ENCODE measurements at regions of chr4 and their contacts with region 1.

Region 1: DNA sequence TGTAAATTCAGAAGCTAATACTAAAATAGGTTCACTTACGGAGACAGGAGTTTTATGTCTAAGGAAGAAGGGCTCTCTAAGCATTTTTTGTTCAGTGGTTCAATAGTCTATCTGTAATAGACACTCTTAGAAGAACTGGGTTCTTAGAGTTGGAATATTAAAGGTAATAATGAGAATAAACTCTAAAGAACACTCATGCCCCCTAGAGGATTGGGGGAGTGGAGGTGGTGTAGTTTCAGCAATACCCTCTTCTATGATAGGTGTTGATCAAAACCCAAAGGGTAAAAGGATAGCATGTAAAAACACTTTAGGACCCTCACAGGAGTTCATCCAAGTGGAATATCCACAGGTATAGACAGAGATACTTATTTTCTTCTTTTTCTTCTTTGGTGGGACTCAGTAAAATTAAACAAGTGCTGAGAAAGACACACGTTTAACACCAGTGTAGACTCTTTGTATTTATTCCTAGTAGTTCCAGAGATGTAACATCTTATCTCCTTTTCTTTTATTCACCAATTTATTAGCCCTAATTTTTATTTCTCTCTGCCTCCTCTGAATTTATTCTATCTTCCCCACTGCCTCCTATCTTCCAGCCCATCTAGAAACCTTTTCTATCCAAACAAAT is 25.7 kb upstream of the MND1 start:
- DNase-seq: peak; percentile 68
- H3K4me3 Mint-ChIP-seq: no peak overlapping the region
- H3K27ac Mint-ChIP-seq: no peak overlapping the region
- H3K4me1 Mint-ChIP-seq: no peaks in the 10 kb centered on the region
- H3K27me3 Mint-ChIP-seq: no peaks in the 10 kb centered on the region
- CTCF ChIP-seq: peak; percentile 57

Region 2: GRCh38 chr4:152843481-152844090 is 475.2 kb before region 1 on chr4:
- CTCF ChIA-PET with region 1: no interaction called
- POLR2A ChIA-PET with region 1: no interaction called
- intact Hi-C with region 1: loop called (anchors 10 kb)
- DNase-seq: no peak
- H3K4me3 Mint-ChIP-seq: no peak overlapping the region
- H3K27ac Mint-ChIP-seq: no peak overlapping the region
- H3K4me1 Mint-ChIP-seq: no peaks in the 10 kb centered on the region
- H3K27me3 Mint-ChIP-seq: no peaks in the 10 kb centered on the region
- CTCF ChIP-seq: no peak

Region 3: DNA sequence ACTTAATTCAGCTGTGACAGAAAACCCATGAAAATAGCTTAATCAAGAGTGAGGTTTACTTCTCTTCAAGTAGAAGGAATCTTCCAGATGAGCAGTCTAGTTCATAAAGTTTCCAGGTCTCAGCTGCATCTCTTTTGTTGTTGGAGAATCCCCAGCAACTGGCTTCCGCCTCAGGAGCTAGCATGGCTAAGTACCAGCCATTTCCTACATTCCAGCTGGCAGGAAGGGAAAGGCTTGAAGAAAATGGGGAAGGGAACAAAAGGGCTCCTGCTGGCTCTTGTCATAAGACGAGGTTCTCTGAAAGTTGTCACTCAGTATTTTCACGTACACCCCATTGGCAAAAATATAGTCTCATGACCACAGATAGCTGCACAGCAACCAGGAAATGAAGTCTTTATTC is 141.9 kb before region 1 on chr4:
- CTCF ChIA-PET with region 1: no interaction called
- POLR2A ChIA-PET with region 1: no interaction called
- intact Hi-C with region 1: no loop called
- DNase-seq: no peak
- H3K4me3 Mint-ChIP-seq: no peak overlapping the region
- H3K27ac Mint-ChIP-seq: no peak overlapping the region
- H3K4me1 Mint-ChIP-seq: peaks cover 11% of the 10 kb centered on the region
- H3K27me3 Mint-ChIP-seq: no peaks in the 10 kb centered on the region
- CTCF ChIP-seq: no peak

Region 4: GRCh38 chr4:153207567-153207966 is 111.2 kb before region 1 on chr4:
- CTCF ChIA-PET with region 1: no interaction called
- POLR2A ChIA-PET with region 1: no interaction called
- intact Hi-C with region 1: loop called (anchors 1 kb)
- DNase-seq: peak; percentile 46
- H3K4me3 Mint-ChIP-seq: no peak overlapping the region
- H3K27ac Mint-ChIP-seq: no peak overlapping the region
- H3K4me1 Mint-ChIP-seq: peaks cover 6% of the 10 kb centered on the region
- H3K27me3 Mint-ChIP-seq: no peaks in the 10 kb centered on the region
- CTCF ChIP-seq: peak; percentile 37

Region 5: DNA sequence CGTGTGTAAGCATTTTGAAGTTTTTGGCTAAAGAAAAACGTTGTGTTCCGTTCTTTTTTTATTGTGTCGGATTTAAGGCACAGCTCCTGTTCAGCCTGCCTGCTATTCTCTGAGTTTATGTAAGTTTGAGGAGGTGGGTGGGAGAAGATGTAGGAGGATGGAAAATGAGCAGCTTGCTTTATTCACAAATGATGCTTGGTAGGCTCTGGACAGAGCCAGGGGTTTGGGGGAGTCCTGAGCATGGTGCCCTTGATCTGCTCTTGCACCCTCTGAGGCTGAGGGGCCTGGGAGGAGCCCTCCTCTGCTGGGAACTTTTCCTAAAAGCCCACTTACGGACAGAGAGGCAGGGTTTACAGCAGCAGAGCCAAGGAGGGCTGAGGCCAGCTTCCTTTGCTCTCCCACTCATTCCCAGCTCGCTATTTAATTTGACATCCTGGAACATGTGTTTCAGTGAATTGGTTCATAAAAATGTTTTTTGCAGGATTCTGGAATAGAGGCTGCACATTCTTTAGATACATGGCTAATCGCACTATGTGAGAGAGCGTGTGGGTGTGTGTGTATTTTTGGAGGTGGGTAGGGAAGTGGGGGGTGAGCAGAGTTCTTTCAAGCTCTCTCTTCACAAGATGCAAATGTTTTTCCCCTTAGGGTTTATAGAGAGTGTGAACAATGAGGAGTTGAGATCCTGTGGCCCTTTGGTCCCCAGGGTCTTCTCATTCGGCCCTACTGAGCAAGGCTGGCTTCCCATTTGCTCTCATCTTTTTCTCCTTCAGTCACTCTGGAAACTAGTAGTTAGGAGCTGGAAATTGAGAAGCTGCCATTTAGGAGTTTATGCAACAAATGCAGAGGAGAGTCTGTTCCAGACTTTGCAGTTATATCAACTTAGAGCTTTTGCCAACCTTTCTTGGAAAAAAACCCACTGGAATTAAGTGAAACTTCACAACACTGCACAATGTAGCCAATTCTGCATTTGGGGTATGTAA is 179.5 kb after region 1 on chr4:
- CTCF ChIA-PET with region 1: no interaction called
- POLR2A ChIA-PET with region 1: no interaction called
- intact Hi-C with region 1: no loop called
- DNase-seq: no peak
- H3K4me3 Mint-ChIP-seq: no peak overlapping the region
- H3K27ac Mint-ChIP-seq: no peak overlapping the region
- H3K4me1 Mint-ChIP-seq: peaks cover 15% of the 10 kb centered on the region
- H3K27me3 Mint-ChIP-seq: no peaks in the 10 kb centered on the region
- CTCF ChIP-seq: no peak

Region 6: GRCh38 chr4:153832720-153833287 is 514.0 kb after region 1 on chr4:
- CTCF ChIA-PET with region 1: no interaction called
- POLR2A ChIA-PET with region 1: no interaction called
- intact Hi-C with region 1: no loop called
- DNase-seq: no peak
- H3K4me3 Mint-ChIP-seq: no peak overlapping the region
- H3K27ac Mint-ChIP-seq: no peak overlapping the region
- H3K4me1 Mint-ChIP-seq: no peaks in the 10 kb centered on the region
- H3K27me3 Mint-ChIP-seq: peaks cover 15% of the 10 kb centered on the region
- CTCF ChIP-seq: no peak